ENCODE measurements at regions of chr1 and their contacts with region 1.

Region 1: DNA sequence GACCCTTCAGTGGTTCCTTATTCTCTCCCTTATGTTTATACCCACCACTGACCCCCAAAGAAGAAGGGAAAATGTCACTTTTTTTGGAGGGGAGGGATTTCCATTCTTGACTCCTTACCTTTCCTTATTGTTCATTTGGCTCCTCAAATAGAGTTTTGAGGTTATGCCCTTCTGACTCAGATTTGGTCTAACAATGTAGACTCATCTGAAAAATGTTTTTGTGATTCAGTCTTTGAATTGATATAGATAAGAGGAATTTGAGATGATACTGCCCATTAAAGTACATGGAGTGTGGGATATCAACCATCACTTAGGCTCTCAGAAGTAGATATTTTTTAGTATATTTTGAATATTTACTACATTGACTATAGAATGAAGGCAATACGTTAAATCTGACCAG is 16.1 kb downstream of the USP1 start:
- DNase-seq: no peak
- ATAC-seq: no peak
- H3K4me3 ChIP-seq: no peak overlapping the region
- H3K4me3 Mint-ChIP-seq: no peak overlapping the region
- H3K27ac ChIP-seq: no peak overlapping the region
- H3K27ac Mint-ChIP-seq: no peak overlapping the region
- H3K4me1 ChIP-seq: peaks cover 0 to 17% of the 10 kb centered on the region in 2 donors
- H3K4me1 Mint-ChIP-seq: peaks cover 0 to 16% (median 7%) of the 10 kb centered on the region in 7 donors
- H3K27me3 ChIP-seq: no peaks in the 10 kb centered on the region
- H3K27me3 Mint-ChIP-seq: no peaks in the 10 kb centered on the region

Region 2: DNA sequence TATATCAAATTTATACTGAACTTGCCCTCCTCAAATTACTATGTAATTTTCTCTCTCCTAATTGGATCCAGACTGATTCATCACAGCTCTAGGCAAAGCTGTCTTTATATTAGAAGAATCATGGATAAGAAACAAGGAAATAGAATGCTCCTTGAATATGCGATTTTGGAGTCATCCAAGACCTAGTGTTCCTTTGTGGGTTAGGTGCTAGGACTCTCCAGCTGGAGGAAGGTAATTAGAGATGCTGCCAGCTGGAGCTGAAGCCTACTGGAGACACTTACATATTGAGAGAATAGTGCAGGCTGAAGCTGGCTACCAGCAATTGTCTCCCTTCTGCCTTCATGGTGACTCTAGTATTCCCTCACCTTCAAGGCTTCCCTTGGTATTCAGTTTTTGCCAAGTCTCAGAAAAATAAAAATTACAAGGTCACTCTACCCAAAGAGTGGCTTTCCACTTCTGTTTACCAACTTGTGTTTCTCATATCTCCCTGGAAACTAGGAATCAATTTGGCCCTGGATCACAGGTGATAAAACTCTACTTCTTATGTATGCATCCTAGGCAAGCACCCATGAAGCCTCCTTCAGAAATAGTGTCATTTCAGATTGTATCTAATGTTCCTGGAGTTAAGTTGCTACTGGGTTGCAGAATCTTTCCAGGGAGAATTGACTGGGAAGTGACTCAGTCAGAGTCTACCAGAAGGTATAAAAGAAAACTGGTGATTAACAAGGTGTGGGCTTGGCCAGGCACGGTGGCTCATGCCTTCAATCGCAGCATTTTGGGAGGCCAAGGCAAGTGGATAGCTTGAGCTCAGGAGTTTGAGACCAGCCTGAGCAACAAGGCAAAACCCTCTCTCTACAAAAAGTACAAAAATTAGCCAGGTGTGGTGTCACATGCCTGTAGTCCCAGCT is 259.6 kb after region 1 on chr1:
- CTCF ChIA-PET with region 1: no interaction called
- POLR2A ChIA-PET with region 1: interaction called, 10 read pairs
- intact Hi-C with region 1: no loop called
- DNase-seq: no peak
- ATAC-seq: no peak
- H3K4me3 ChIP-seq: no peak overlapping the region
- H3K4me3 Mint-ChIP-seq: no peak overlapping the region
- H3K27ac ChIP-seq: no peak overlapping the region
- H3K27ac Mint-ChIP-seq: no peak overlapping the region
- H3K4me1 ChIP-seq: no peaks in the 10 kb centered on the region
- H3K4me1 Mint-ChIP-seq: no peaks in the 10 kb centered on the region
- H3K27me3 ChIP-seq: no peaks in the 10 kb centered on the region
- H3K27me3 Mint-ChIP-seq: peaks cover 0 to 6% (median 0%) of the 10 kb centered on the region in 5 donors

Measured in naive thymus-derived CD4-positive, alpha-beta T cell (primary cell).